Activated CD8-positive, alpha-beta T cell treated with anti-CD3 and anti-CD28 coated beads, Interleukin-2, amount 10 ng/mL, durations not matched to agents 7 days and 5 days (primary cell): ENCODE measurements at regions of chr2 and their contacts with region 1.

Region 1: GRCh38 chr2:28870146-28870891 is at the start of gene TRMT61B:
- DNase-seq: peak; percentile 98
- ATAC-seq: peak; percentile 98
- H3K4me3 Mint-ChIP-seq: peak within 1 kb of the TSS; percentile 95
- H3K27ac Mint-ChIP-seq: peak within 1 kb of the TSS; percentile 99
- H3K4me1 Mint-ChIP-seq: peaks cover 30% of the 10 kb centered on the region
- H3K27me3 Mint-ChIP-seq: no peaks in the 10 kb centered on the region
- total RNA-seq, gene TRMT61B: 15.1 to 15.5 TPM

Region 2: GRCh38 chr2:28583899-28584553 is 286.3 kb before region 1 on chr2:
- CTCF ChIA-PET with region 1: no interaction called
- POLR2A ChIA-PET with region 1: no interaction called
- DNase-seq: peak; percentile 62
- ATAC-seq: peak; percentile 33
- H3K4me3 Mint-ChIP-seq: no peak overlapping the region
- H3K27ac Mint-ChIP-seq: no peak overlapping the region
- H3K4me1 Mint-ChIP-seq: peaks cover 61% of the 10 kb centered on the region
- H3K27me3 Mint-ChIP-seq: no peaks in the 10 kb centered on the region

Region 3: GRCh38 chr2:28894470-28895177 is 24.3 kb after region 1 on chr2 and contains the start of gene WDR43:
- CTCF ChIA-PET with region 1: interaction called, 10 read pairs
- POLR2A ChIA-PET with region 1: interaction called, 48 read pairs
- DNase-seq: peak; percentile 98
- ATAC-seq: peak; percentile 96
- H3K4me3 Mint-ChIP-seq: peak within 1 kb of the TSS; percentile 95
- H3K27ac Mint-ChIP-seq: peak within 1 kb of the TSS; percentile 94
- H3K4me1 Mint-ChIP-seq: peaks cover 35% of the 10 kb centered on the region
- H3K27me3 Mint-ChIP-seq: peaks cover 2% of the 10 kb centered on the region
- total RNA-seq, gene WDR43: 70.3 to 81.2 TPM